Vagina (tissue), 2 donors: ENCODE measurements at regions of chr1 and their contacts with region 1.

Region 1: GRCh38 chr1:197210426-197210825 is 57.6 kb upstream of the CRB1 start:
- DNase-seq: no peak
- H3K4me3 ChIP-seq: no peak overlapping the region
- H3K27ac ChIP-seq: no peak overlapping the region
- H3K4me1 ChIP-seq: no peaks in the 10 kb centered on the region
- H3K27me3 ChIP-seq: no peaks in the 10 kb centered on the region
- CTCF ChIP-seq: no peak
- POLR2A ChIP-seq: no peak

Region 2: GRCh38 chr1:197130677-197131304 is 79.6 kb before region 1 on chr1:
- intact Hi-C with region 1: no loop called
- DNase-seq: no peak
- H3K4me3 ChIP-seq: no peak overlapping the region
- H3K27ac ChIP-seq: no peak overlapping the region
- H3K4me1 ChIP-seq: no peaks in the 10 kb centered on the region
- H3K27me3 ChIP-seq: no peaks in the 10 kb centered on the region
- CTCF ChIP-seq: no peak
- POLR2A ChIP-seq: no peak

Region 3: GRCh38 chr1:199054694-199055093 is 1844.3 kb after region 1 on chr1:
- intact Hi-C with region 1: loop called (anchors 10 kb)
- DNase-seq: no peak
- H3K4me3 ChIP-seq: no peak overlapping the region
- H3K27ac ChIP-seq: no peak overlapping the region
- H3K4me1 ChIP-seq: no peaks in the 10 kb centered on the region
- H3K27me3 ChIP-seq: no peaks in the 10 kb centered on the region
- CTCF ChIP-seq: no peak
- POLR2A ChIP-seq: no peak